Prostate gland (tissue), 2 donors: ENCODE measurements at regions of chr15 and their contacts with region 1.

Region 1: GRCh38 chr15:92097474-92098178 is 244.1 kb downstream of the SLCO3A1 start:
- DNase-seq: peak; percentile 49
- H3K4me3 ChIP-seq: no peak overlapping the region
- H3K27ac ChIP-seq: no peak overlapping the region
- H3K4me1 ChIP-seq: no peaks in the 10 kb centered on the region
- H3K27me3 ChIP-seq: no peaks in the 10 kb centered on the region
- CTCF ChIP-seq: peak; percentile 34 to 77 (median 72)
- POLR2A ChIP-seq: no peak

Region 2: GRCh38 chr15:92068121-92068520 is 29.5 kb before region 1 on chr15:
- intact Hi-C with region 1: no loop called
- DNase-seq: no peak
- H3K4me3 ChIP-seq: no peak overlapping the region
- H3K27ac ChIP-seq: no peak overlapping the region
- H3K4me1 ChIP-seq: no peaks in the 10 kb centered on the region
- H3K27me3 ChIP-seq: no peaks in the 10 kb centered on the region
- CTCF ChIP-seq: no peak
- POLR2A ChIP-seq: no peak

Region 3: DNA sequence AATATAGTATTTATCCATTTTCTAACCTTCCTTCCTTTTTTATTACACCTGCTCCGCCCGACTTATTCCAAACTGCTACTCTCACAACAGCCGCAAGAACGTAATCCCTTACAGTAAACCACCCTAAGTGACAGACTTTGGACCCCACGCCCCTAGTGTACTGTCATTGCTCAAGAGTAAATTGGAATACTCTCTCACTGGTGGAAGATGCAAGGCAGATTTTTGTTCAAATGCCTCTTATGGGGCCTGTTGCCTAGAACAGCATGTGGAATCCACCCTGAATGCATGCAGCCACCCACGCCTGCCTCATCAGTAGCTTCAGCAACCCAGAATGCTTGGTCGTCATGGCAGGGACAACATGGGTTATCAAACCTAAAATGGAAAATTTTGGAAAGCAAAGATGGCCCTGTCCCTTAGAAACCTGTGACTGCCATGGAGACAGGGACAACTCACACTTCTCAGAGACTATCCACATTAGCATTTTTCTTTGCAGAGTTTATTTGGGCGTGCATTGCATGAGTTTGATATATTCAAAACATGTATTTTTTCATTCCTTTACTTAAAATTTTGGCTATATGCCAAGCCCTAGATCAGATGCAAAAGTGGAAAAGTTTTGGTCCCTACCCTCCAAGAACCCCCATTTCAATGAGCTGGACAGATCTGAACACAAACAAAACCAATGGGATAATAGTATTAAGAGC is 70.0 kb after region 1 on chr15:
- intact Hi-C with region 1: no loop called
- DNase-seq: no peak
- H3K4me3 ChIP-seq: no peak overlapping the region
- H3K27ac ChIP-seq: no peak overlapping the region
- H3K4me1 ChIP-seq: no peaks in the 10 kb centered on the region
- H3K27me3 ChIP-seq: no peaks in the 10 kb centered on the region
- CTCF ChIP-seq: no peak
- POLR2A ChIP-seq: no peak

Region 4: GRCh38 chr15:92226014-92226612 is 128.5 kb after region 1 on chr15:
- intact Hi-C with region 1: loop called (anchors 5 kb)
- DNase-seq: no peak
- H3K4me3 ChIP-seq: no peak overlapping the region
- H3K27ac ChIP-seq: no peak overlapping the region
- H3K4me1 ChIP-seq: no peaks in the 10 kb centered on the region
- H3K27me3 ChIP-seq: no peaks in the 10 kb centered on the region
- CTCF ChIP-seq: peak in 3 of 4 experiments; percentile 37 to 49 (median 38)
- POLR2A ChIP-seq: no peak

Region 5: GRCh38 chr15:92499731-92500530 is 402.3 kb after region 1 on chr15:
- intact Hi-C with region 1: loop called (anchors 10 kb)
- DNase-seq: no peak
- H3K4me3 ChIP-seq: no peak overlapping the region
- H3K27ac ChIP-seq: no peak overlapping the region
- H3K4me1 ChIP-seq: no peaks in the 10 kb centered on the region
- H3K27me3 ChIP-seq: no peaks in the 10 kb centered on the region
- CTCF ChIP-seq: no peak
- POLR2A ChIP-seq: no peak

Region 6: GRCh38 chr15:92683232-92683834 is 585.7 kb after region 1 on chr15:
- intact Hi-C with region 1: loop called (anchors 10 kb)
- DNase-seq: peak; percentile 39
- H3K4me3 ChIP-seq: no peak overlapping the region
- H3K27ac ChIP-seq: no peak overlapping the region
- H3K4me1 ChIP-seq: no peaks in the 10 kb centered on the region
- H3K27me3 ChIP-seq: no peaks in the 10 kb centered on the region
- CTCF ChIP-seq: peak in 3 of 4 experiments; percentile 50 to 73 (median 70)
- POLR2A ChIP-seq: no peak

Region 7: GRCh38 chr15:92714477-92715401 is 617.1 kb after region 1 on chr15:
- intact Hi-C with region 1: loop called (anchors 5 kb)
- DNase-seq: peak; percentile 74
- H3K4me3 ChIP-seq: peak overlapping the region; percentile 35 to 56
- H3K27ac ChIP-seq: peak overlapping the region; percentile 73 to 79
- H3K4me1 ChIP-seq: no peaks in the 10 kb centered on the region
- H3K27me3 ChIP-seq: no peaks in the 10 kb centered on the region
- CTCF ChIP-seq: peak; percentile 59 to 92 (median 92)
- POLR2A ChIP-seq: peak; percentile 19